Gastrocnemius medialis (tissue), 4 donors: ENCODE measurements at regions of chr7 and their contacts with region 1.

Region 1: GRCh38 chr7:151631968-151632749 is 112.5 kb upstream of the RHEB start:
- DNase-seq: peak; percentile 46 to 66
- ATAC-seq: peak; percentile 77 to 80
- H3K4me3 ChIP-seq: peak overlapping the region; percentile 54 to 71 (median 63)
- H3K27ac ChIP-seq: peak overlapping the region; percentile 70 to 84 (median 78)
- H3K4me1 ChIP-seq: peaks cover 8 to 13% of the 10 kb centered on the region in 2 donors
- H3K27me3 ChIP-seq: no peaks in the 10 kb centered on the region
- CTCF ChIP-seq: peak in 3 of 5 experiments; percentile 30 to 38 (median 31)
- POLR2A ChIP-seq: peak; percentile 52 to 62

Region 2: DNA sequence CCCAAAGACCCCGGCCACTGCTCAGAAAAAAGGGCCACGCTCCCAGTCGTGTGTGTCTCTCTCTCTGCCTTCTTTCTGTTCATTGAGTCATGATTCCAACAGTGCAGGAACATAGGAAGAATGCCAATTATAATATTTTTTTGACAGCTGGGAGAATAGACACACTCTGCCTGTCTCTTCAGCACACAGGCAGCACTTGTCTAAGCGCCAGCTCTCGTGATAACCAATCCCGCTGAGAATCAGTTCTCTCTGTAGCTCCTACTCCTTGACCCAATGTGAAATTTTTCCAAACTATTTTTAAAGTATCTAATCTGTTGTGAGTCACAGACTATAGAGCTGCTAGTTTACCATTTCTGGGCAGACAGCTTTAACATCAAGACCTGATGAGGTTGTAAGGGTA is 33.2 kb after region 1 on chr7:
- in situ Hi-C with region 1: no loop called
- intact Hi-C with region 1: no loop called
- DNase-seq: no peak
- ATAC-seq: peak; percentile 41 to 61
- H3K4me3 ChIP-seq: no peak overlapping the region
- H3K27ac ChIP-seq: peak overlapping the region in 1 of 4 donors; percentile 14
- H3K4me1 ChIP-seq: no peaks in the 10 kb centered on the region
- H3K27me3 ChIP-seq: no peaks in the 10 kb centered on the region
- CTCF ChIP-seq: no peak
- POLR2A ChIP-seq: no peak

Region 3: DNA sequence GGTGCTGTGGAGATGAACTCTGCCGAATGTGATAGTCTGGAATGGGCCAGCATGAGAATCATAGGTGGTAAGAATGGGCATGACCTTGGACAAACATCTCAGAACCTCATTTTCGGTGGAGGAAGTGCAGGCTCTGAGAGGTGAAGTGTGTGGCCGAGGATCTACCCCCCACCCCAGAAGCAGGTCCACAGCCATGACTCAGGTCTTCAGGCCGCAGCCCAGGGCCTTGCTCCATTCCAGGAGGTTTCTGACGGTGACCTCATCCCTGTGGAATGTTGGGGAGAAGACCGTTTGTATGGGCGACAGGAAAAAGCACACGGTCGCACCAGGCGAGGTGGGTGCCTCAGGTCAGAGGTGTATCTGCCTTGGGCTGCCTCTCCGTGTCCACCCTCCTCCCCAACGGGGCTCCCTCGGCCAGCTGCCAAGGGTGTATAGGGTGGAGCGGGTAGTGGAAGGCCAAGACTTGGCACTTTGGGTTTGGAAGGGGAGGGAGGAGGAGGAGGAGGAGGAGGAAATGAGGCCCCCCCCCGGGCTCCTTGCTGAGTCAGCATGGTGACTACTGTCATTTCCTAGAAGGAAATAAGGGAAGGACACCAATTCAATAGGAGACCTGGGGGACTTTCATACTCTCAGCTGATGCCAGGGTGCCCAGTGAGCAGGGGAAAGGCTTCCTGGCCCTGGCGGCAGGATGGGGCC is 55.5 kb after region 1 on chr7:
- in situ Hi-C with region 1: loop called in 1 of 4 experiments (anchors 10 kb)
- intact Hi-C with region 1: loop called (anchors 5 kb)
- DNase-seq: peak; percentile 40 to 69
- ATAC-seq: peak; percentile 48 to 79
- H3K4me3 ChIP-seq: no peak overlapping the region
- H3K27ac ChIP-seq: peak overlapping the region; percentile 44 to 66 (median 54)
- H3K4me1 ChIP-seq: peaks cover 14 to 18% of the 10 kb centered on the region in 2 donors
- H3K27me3 ChIP-seq: no peaks in the 10 kb centered on the region
- CTCF ChIP-seq: no peak
- POLR2A ChIP-seq: no peak

Region 4: GRCh38 chr7:151754142-151754590 is 122.0 kb after region 1 on chr7:
- in situ Hi-C with region 1: loop called in 1 of 4 experiments (anchors 5 kb)
- intact Hi-C with region 1: loop called (anchors 2 kb)
- DNase-seq: peak; percentile 76 to 86
- ATAC-seq: peak; percentile 97 to 99
- H3K4me3 ChIP-seq: no peak overlapping the region
- H3K27ac ChIP-seq: peak overlapping the region; percentile 41 to 60 (median 50)
- H3K4me1 ChIP-seq: peaks cover 17 to 20% of the 10 kb centered on the region in 2 donors
- H3K27me3 ChIP-seq: no peaks in the 10 kb centered on the region
- CTCF ChIP-seq: peak; percentile 84 to 92 (median 90)
- POLR2A ChIP-seq: no peak

Region 5: DNA sequence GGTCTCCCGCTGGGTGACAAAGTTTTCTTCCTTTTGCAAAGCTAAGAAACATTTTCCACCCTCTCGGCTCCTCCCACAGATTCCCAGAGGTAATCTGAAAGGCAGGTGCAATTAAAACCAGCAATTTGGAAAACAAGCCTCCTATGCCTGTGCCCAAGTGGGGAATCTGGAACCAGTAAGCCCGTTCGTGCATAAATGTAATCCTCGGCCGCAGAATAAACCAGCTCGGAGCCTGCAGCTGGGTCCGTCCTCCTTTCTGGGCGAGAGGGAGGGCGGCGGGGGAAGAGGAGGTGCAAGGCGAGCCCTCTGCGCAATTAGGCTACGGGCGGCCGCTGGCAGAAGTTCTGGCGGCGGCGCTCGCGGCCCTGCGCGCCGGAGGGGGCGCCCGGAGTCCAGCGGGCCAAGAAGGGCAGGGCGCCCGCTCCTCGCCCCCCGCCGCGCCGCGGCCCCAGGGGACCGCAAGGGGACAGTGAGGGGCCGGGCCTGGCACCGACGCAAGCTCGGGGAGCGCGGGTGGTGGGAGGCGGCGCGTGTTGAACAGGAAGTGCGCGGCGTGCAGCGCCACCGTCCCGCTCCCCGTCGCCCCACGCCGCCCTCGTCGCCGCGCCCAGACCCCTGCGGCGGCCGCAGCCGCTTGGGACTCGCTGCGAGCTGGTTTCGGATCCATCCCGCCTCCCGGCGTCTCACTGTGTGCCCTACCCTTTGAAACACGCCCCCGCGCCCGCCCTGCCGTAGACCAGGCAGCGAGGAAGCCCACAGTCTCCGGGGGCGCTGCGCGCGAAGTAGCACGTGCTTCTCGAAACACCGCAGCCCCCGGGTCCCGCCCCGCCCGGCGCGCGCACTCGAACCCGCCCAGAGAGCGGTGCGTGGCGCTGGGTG is 245.0 kb after region 1 on chr7 and contains the start of gene PRKAG2:
- in situ Hi-C with region 1: no loop called
- intact Hi-C with region 1: loop called (anchors 10 kb)
- DNase-seq: peak; percentile 46 to 55
- ATAC-seq: peak; percentile 49 to 51
- H3K4me3 ChIP-seq: peak within 1 kb of the TSS; percentile 76 to 97 (median 86)
- H3K27ac ChIP-seq: peak within 1 kb of the TSS; percentile 87 to 93 (median 90)
- H3K4me1 ChIP-seq: peaks cover 8 to 18% of the 10 kb centered on the region in 2 donors
- H3K27me3 ChIP-seq: no peaks in the 10 kb centered on the region
- CTCF ChIP-seq: peak in 2 of 5 experiments; percentile 20 to 21
- POLR2A ChIP-seq: peak; percentile 49 to 59
- total RNA-seq, gene PRKAG2: 5.3 to 32.6 (median 13.9) TPM